ENCODE measurements at regions of chr12 and their contacts with region 1.

Region 1: GRCh38 chr12:13211859-13212664 is 15.5 kb downstream of the EMP1 start:
- DNase-seq: peak; percentile 78
- H3K4me3 Mint-ChIP-seq: peak overlapping the region; percentile 0
- H3K27ac Mint-ChIP-seq: peak overlapping the region; percentile 20
- H3K4me1 Mint-ChIP-seq: peaks cover 43% of the 10 kb centered on the region
- H3K27me3 Mint-ChIP-seq: no peaks in the 10 kb centered on the region
- CTCF ChIP-seq: peak; percentile 69

Region 2: DNA sequence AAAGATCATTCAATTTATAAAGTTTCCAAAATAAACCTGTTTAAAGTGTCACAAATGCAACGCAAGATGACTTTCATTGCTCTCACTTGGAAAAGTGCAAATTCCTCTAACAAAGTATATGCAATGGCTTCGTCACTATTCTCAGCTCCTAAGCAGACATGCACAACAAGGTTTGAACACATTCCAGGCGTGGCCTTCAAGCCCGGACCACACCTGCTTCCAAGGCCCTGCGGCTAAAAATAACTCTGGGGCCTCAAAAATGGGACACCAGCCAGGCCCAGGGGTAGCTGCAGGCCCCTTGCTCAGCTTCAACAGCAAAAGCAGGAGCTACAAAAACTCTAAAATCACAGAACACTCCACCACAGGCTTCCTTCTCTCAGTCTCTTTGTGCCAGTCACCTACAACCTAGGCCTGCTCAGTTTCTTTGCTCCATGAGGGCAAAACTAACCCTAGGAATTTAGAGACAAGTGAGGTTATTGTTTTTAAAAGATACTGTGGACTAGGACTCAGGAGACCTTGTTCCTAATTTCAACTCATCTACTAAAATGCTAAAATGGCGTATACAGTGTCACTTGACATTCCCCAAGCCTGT is 678.7 kb before region 1 on chr12:
- CTCF ChIA-PET with region 1: no interaction called
- POLR2A ChIA-PET with region 1: no interaction called
- intact Hi-C with region 1: no loop called
- DNase-seq: peak; percentile 59
- H3K4me3 Mint-ChIP-seq: no peak overlapping the region
- H3K27ac Mint-ChIP-seq: peak overlapping the region; percentile 23
- H3K4me1 Mint-ChIP-seq: peaks cover 6% of the 10 kb centered on the region
- H3K27me3 Mint-ChIP-seq: no peaks in the 10 kb centered on the region
- CTCF ChIP-seq: no peak

Region 3: GRCh38 chr12:12916135-12916944 is 295.7 kb before region 1 on chr12:
- CTCF ChIA-PET with region 1: interaction called, 31 read pairs
- POLR2A ChIA-PET with region 1: interaction called, 3 read pairs
- intact Hi-C with region 1: no loop called
- DNase-seq: peak; percentile 83
- H3K4me3 Mint-ChIP-seq: no peak overlapping the region
- H3K27ac Mint-ChIP-seq: no peak overlapping the region
- H3K4me1 Mint-ChIP-seq: no peaks in the 10 kb centered on the region
- H3K27me3 Mint-ChIP-seq: no peaks in the 10 kb centered on the region
- CTCF ChIP-seq: peak; percentile 92

Region 4: DNA sequence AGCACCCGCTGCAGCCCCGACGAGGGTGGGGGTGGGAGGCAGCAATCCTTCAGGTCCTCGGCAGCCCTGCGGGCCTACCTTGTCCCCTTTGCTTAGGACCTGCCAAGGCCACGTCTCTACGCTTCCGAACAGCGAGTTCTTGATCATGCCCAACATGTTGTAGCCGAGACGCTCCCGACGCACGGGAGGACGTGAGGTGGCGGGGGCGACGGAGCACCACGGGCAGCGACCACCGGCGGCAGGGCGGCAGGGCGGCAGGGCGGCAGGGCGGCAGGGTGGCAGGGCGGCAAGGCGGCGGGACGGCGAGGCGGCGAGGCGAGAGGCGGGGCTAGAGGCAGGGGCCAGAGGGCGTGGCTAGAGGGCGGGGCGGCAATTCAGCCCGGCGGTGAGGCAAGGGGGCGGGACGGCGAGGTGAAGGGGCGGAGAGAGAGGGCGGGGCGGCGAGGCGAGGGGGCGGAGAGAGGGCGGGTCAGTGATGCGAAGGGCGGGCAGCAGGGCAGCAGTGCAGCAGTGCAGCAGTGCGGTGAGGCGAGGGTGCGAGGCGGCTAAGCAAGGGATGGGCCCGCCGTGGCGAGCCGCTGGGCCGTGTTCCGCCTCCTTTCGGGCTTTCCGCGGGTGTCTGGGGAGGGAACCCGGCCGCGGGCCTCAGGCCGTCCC is 212.0 kb before region 1 on chr12 and contains the start of gene HEBP1:
- CTCF ChIA-PET with region 1: interaction called, 24 read pairs
- POLR2A ChIA-PET with region 1: interaction called, 5 read pairs
- intact Hi-C with region 1: loop called (anchors 1 kb)
- DNase-seq: peak; percentile 89
- H3K4me3 Mint-ChIP-seq: peak within 1 kb of the TSS; percentile 96
- H3K27ac Mint-ChIP-seq: peak within 1 kb of the TSS; percentile 84
- H3K4me1 Mint-ChIP-seq: peaks cover 33% of the 10 kb centered on the region
- H3K27me3 Mint-ChIP-seq: no peaks in the 10 kb centered on the region
- CTCF ChIP-seq: no peak
- total RNA-seq, gene HEBP1: 30.8 and 31.2 TPM in 2 replicates

Region 5: DNA sequence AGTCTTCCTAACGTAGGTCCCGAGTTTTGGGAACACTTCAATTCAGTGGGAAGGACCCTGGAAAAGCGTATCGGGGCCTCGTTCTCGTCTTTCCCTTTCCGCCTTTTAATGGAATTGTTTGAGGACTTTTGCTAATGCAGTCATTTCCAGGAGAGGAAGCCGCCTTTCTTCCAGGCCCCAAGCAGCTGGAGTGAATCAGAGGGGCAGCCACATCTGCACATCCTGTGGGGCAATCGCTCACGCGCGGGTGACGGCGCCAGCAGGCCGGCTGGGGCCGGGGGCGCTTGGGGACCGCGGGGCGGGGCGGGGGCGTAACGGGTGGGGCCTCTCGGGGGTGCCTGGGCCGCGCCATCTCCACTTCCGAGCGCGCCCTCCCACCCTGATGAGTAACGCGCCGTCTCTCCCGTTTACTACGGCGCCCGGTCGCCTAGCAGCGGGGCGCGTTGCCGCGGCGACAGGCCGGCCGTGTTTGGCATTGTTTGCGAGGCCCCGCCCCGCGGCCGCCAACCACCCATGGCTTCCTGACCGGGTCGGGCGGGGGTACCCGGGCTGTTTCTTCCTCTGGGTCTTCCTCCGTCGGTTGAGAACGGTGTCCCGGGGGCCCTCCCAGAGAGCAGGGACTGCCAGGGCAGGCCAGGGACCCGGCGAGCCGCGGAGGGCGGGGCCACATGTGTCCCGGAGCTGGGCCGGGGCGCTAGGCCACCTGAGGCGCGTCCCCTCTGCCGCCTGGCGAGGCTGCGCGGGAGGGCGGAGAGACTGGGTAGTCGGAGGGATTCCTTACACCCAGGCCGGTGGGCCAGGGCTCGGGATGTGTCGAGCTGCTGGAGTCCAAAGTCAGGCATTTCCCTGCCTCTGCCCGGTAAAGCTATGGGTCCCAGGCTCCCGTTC is 110.9 kb before region 1 on chr12:
- CTCF ChIA-PET with region 1: interaction called, 154 read pairs
- POLR2A ChIA-PET with region 1: interaction called, 243 read pairs
- intact Hi-C with region 1: loop called (anchors 1 kb)
- DNase-seq: peak; percentile 90
- H3K4me3 Mint-ChIP-seq: peak overlapping the region; percentile 38
- H3K27ac Mint-ChIP-seq: peak overlapping the region; percentile 99
- H3K4me1 Mint-ChIP-seq: peaks cover 62% of the 10 kb centered on the region
- H3K27me3 Mint-ChIP-seq: no peaks in the 10 kb centered on the region
- CTCF ChIP-seq: no peak

Region 6: GRCh38 chr12:13173012-13173932 is 38.8 kb before region 1 on chr12:
- CTCF ChIA-PET with region 1: interaction called, 21 read pairs
- POLR2A ChIA-PET with region 1: interaction called, 23 read pairs
- intact Hi-C with region 1: no loop called
- DNase-seq: peak; percentile 80
- H3K4me3 Mint-ChIP-seq: peak overlapping the region; percentile 53
- H3K27ac Mint-ChIP-seq: peak overlapping the region; percentile 90
- H3K4me1 Mint-ChIP-seq: peaks cover 52% of the 10 kb centered on the region
- H3K27me3 Mint-ChIP-seq: no peaks in the 10 kb centered on the region
- CTCF ChIP-seq: no peak

Region 7: DNA sequence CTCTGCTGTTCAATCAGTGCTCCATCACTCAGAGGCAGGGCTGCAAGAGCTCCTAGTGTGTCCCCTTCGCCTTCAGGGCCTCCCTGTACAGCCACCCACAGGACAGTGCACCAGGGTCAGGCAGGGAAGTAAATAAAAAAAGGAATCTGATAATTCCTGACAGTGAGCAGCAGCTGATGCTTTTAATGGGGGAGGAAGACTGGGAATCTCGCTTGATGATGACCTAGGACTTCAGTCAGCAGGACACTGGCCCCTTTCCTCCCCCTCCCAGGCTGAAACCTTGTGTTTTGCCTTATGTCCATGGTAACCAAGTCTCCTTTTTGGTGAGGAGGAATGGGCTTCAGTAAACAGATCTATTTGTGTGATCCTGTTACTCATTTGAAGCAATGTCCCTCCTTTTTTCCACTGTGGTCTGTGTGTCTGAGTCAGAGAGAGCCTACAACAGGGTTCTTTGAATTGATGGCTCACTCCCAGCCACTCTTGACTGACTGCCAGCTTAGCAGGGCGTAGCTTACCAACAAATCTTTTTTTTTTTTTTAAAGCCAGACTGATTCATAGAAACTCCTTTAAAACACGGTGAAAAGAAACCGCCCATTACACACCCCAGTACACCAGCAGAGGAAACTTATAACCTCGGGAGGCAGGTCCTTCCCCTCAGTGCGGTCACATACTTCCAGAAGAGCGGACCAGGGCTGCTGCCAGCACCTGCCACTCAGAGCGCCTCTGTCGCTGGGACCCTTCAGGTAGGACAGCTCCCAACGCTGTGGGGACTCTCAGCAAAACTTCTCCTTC is 15.7 kb before region 1 on chr12 and contains the start of gene EMP1:
- CTCF ChIA-PET with region 1: interaction called, 46 read pairs
- POLR2A ChIA-PET with region 1: interaction called, 142 read pairs
- intact Hi-C with region 1: no loop called
- DNase-seq: peak; percentile 99
- H3K4me3 Mint-ChIP-seq: peak within 1 kb of the TSS; percentile 79
- H3K27ac Mint-ChIP-seq: peak within 1 kb of the TSS; percentile 82
- H3K4me1 Mint-ChIP-seq: peaks cover 51% of the 10 kb centered on the region
- H3K27me3 Mint-ChIP-seq: no peaks in the 10 kb centered on the region
- CTCF ChIP-seq: no peak
- total RNA-seq, gene EMP1: 193 and 230 TPM in 2 replicates